ENCODE measurements at regions of chr1 and their contacts with region 1.

Region 1: GRCh38 chr1:32538887-32539583 is at the start of gene ZBTB8A:
- DNase-seq: peak in 4 of 5 donors; percentile 21 to 37 (median 32)
- ATAC-seq: peak; percentile 50 to 59 (median 58)
- H3K4me3 ChIP-seq: peak within 1 kb of the TSS; percentile 46 to 86 (median 65)
- H3K27ac ChIP-seq: peak within 1 kb of the TSS; percentile 32 to 84 (median 67)
- H3K4me1 ChIP-seq: peaks cover 0 to 26% (median 8%) of the 10 kb centered on the region in 12 donors
- H3K27me3 ChIP-seq: peaks cover 0 to 31% (median 0%) of the 10 kb centered on the region in 9 donors
- CTCF ChIP-seq: peak in 1 of 12 donors; percentile 22
- POLR2A ChIP-seq: no peak
- total RNA-seq, gene ZBTB8A: 1.8 to 5.0 (median 3.1) TPM

Region 2: DNA sequence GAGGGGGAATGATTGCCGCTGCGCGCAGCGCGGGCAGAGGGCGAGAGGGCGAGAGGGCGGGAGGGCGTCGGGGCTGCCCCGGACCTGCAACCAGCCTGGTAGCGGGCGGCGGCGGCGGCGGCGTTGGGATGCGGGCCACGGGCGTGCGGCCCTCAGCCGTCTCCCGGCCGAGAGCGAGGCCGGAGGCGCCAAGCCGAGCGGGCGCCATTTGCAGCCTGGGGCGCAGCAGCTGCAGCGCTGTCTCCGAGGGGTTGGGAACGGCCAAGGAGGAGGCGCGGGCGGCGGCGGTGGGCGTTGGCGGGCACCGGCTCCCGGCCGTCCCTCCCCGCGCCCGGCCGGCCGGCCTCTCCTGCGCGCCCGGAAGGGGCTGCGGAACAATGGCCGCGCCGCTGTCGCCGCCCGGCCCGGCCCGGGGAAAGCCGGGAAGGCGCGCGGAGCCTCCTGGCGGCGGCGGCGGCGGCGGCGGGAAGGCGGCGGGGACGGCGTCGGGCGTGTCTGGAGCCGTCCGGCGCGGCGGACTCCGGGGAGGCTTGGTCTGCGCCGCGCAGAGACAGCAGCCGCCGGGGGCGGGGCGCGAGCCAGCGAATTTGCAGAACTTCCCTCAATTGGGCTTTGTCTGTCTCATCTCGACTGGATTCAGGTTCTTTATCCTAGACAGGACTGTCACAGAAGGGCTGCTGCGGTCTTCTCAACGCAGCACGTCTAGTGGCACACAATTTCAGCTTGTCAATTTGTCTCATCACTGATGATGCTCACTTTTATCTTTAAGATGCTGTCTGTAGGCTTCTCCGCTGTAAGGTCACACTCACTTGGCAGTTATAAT is 38.4 kb before region 1 on chr1:
- intact Hi-C with region 1: loop called in 1 of 10 experiments (anchors 1 kb)
- DNase-seq: peak; percentile 74 to 89 (median 79)
- ATAC-seq: peak; percentile 45 to 92 (median 86)
- H3K4me3 ChIP-seq: peak overlapping the region; percentile 61 to 95 (median 82)
- H3K27ac ChIP-seq: peak overlapping the region; percentile 91 to 100 (median 96)
- H3K4me1 ChIP-seq: peaks cover 2 to 24% (median 18%) of the 10 kb centered on the region in 12 donors
- H3K27me3 ChIP-seq: no peaks in the 10 kb centered on the region
- CTCF ChIP-seq: peak in 8 of 12 donors; percentile 8 to 49 (median 36)
- POLR2A ChIP-seq: peak in 1 of 2 donors; percentile 56

Region 3: DNA sequence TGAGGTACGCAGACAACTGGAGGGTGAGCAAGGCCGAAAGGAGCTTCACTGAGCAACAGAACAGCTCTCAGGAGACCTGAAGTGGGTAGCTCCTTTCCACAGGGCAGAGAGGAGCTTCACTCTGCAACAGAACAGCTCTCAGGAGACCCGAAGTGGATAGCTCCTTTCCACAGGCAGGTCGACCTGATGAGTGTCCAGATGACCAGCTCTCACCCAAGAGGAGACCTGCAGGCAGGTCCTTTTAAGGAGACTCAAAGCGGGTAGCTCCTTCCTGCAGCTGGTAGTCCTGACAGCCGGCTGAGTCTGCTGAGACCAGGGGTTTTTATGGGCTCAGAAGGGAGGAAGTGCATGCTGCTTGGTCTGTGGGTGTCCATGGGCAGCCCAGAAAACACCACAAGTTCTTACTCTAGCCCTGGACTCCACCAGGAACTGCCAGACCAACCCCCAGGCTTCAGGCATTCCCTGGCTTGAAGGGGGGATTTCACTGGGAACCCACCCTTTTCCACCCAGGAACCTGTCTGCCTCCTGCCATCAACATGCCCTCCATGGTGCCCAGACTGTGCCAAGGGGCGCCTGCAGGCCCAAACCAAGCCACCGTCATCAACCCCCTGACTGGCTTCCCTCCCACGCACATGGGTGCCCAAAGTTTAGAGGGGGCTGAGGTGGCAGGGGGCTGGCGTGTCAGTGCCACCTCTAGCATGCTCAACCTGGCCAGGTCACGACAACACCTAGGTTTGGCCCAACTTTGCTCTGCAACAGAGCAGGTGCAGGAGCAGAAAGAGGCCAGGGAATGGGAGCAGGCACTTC is 67.7 kb after region 1 on chr1:
- intact Hi-C with region 1: loop called in 1 of 10 experiments (anchors 5 kb)
- DNase-seq: no peak
- ATAC-seq: no peak
- H3K4me3 ChIP-seq: no peak overlapping the region
- H3K27ac ChIP-seq: no peak overlapping the region
- H3K4me1 ChIP-seq: peaks cover 0 to 5% (median 0%) of the 10 kb centered on the region in 12 donors
- H3K27me3 ChIP-seq: no peaks in the 10 kb centered on the region
- CTCF ChIP-seq: no peak
- POLR2A ChIP-seq: no peak

Measured in heart left ventricle (tissue), 16 donors.